CD14-positive monocyte (primary cell): ENCODE measurements at regions of chr16 and their contacts with region 1.

Region 1: DNA sequence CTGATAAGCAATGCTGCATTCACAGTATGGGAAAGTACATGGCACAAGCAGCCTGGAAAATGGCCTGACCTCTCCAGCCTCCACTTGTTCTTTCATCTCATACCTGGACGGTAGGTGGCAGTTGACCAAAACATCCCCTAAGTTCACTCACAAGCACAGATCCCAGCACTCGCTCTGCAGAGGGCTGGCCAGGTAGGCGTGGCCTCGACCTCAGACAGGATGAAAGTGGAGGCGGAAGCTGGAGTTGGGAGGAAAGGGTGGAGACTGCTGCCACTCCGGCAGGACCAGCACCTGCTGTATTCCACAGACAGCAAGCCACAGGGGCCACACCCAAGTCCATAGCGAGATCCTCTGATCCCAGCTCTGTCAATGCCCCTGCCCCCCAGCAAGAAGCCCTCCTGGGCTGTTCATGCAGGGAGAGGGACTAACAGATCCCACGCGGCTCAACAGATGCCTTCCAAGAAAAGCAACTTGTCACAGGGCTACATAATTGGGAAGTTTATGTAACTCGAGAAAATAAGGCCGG is 31.3 kb downstream of the ZCCHC14 start:
- DNase-seq: peak in 1 of 3 donors; percentile 7
- H3K4me3 ChIP-seq: no peak overlapping the region
- H3K4me3 Mint-ChIP-seq: no peak overlapping the region
- H3K27ac ChIP-seq: no peak overlapping the region
- H3K27ac Mint-ChIP-seq: peak overlapping the region in 1 of 7 donors; percentile 37
- H3K4me1 ChIP-seq: peaks cover 27 to 28% of the 10 kb centered on the region in 2 donors
- H3K4me1 Mint-ChIP-seq: peaks cover 33% of the 10 kb centered on the region
- H3K27me3 ChIP-seq: no peaks in the 10 kb centered on the region
- H3K27me3 Mint-ChIP-seq: peaks cover 0 to 7% (median 6%) of the 10 kb centered on the region in 3 donors
- CTCF ChIP-seq: no peak

Region 2: DNA sequence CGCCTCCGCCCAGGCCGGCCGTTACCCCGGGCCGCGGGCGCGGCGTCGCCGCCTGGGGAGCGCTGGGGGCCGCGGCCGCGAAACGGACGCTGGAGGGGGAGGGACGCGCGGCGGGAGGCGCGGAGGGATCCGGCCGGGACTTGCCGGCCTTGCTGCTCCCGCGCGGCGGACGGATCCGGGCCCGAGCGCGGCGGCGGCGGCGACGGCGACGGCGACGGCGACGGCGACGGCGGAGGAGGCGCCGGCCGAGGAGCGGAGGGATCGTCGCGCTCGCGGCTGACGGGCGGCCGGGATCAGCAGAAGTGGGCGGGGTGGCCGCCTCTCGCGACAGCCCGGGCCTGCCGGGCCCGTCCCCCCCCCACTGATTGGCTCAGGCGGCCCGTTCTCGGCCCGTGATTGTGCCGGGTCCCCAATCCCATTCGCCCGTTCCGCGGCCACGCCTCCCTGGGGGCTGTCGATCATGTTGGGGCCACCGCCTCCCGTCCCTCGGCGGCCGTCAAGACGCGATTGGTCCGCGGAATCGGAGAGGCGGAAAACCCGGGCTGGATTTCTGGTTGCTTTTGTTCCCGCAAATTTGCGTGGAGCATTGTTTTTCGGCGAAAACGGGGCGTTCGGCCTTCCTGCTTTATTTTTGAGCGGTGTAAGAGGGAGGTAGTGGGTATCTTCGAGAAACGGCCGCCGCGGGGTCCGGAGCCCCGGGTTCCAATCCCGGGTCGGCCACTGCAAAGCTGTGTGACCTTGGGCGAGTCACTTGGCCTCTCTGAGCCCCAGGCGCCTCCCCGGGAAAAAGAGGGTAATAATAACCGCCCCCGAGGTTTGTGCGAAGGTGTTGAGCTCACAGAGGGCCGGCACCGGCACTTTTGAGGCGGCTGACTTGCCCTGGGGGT is 31.4 kb after region 1 on chr16 and contains the start of gene ZCCHC14:
- intact Hi-C with region 1: loop called in 1 of 2 experiments (anchors 2 kb)
- DNase-seq: peak; percentile 95 to 97 (median 97)
- H3K4me3 ChIP-seq: peak within 1 kb of the TSS; percentile 23 to 73 (median 36)
- H3K4me3 Mint-ChIP-seq: peak within 1 kb of the TSS; percentile 80 to 91
- H3K27ac ChIP-seq: no peak within 1 kb of the TSS
- H3K27ac Mint-ChIP-seq: peak within 1 kb of the TSS in 4 of 7 donors; percentile 7 to 79 (median 50)
- H3K4me1 ChIP-seq: peaks cover 23 to 28% of the 10 kb centered on the region in 2 donors
- H3K4me1 Mint-ChIP-seq: peaks cover 54% of the 10 kb centered on the region
- H3K27me3 ChIP-seq: peaks cover 0 to 44% of the 10 kb centered on the region in 2 donors
- H3K27me3 Mint-ChIP-seq: peaks cover 34 to 68% (median 61%) of the 10 kb centered on the region in 3 donors
- CTCF ChIP-seq: no peak
- polyA plus RNA-seq, gene ZCCHC14: 0.11 to 4.0 (median 0.22) TPM

Region 3: GRCh38 chr16:87507351-87508069 is 46.0 kb after region 1 on chr16:
- intact Hi-C with region 1: loop called in 1 of 2 experiments (anchors 5 kb)
- DNase-seq: peak in 2 of 3 donors; percentile 25 to 39
- H3K4me3 ChIP-seq: peak overlapping the region in 1 of 3 experiments; percentile 33
- H3K4me3 Mint-ChIP-seq: peak overlapping the region; percentile 56 to 87
- H3K27ac ChIP-seq: no peak overlapping the region
- H3K27ac Mint-ChIP-seq: peak overlapping the region in 5 of 7 donors; percentile 10 to 64 (median 51)
- H3K4me1 ChIP-seq: peaks cover 14 to 21% of the 10 kb centered on the region in 2 donors
- H3K4me1 Mint-ChIP-seq: peaks cover 23% of the 10 kb centered on the region
- H3K27me3 ChIP-seq: peaks cover 6 to 8% of the 10 kb centered on the region in 2 donors
- H3K27me3 Mint-ChIP-seq: peaks cover 8 to 24% (median 9%) of the 10 kb centered on the region in 3 donors
- CTCF ChIP-seq: no peak

Region 4: DNA sequence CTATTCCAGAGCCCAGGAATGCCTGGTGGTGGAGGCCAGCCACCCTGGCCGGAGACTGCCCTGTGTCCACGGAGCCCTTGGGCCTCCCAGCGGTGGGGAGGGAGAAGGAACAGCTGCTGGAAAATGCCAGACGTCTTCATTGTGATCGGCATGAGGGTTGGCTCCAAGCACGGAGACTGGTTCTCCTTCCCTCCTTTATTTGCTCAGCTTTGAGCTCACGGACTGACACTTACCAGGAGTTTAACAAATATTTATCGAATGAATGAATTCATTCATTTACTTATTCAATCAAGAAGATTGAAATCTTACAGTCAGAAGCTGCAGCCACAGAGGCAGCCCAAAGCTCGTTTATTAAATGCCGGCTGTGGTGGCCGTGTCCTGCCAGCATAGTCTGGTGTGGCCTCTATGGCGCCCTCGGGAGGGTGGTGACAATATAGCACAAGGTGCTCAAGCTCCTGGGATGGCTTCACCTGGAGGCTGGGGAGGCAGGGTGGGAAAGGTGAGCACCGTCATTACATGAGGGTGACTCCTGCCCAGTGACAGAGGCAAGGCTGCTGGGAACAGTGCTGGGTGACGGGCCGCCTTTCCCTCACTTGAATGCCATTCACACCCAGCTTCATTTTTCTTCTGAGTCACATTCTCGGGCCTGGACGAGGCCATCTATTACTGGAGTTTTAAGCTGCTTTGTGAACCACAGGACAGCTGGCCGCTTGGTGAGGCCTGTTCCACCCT is 109.8 kb after region 1 on chr16:
- intact Hi-C with region 1: no loop called
- DNase-seq: no peak
- H3K4me3 ChIP-seq: no peak overlapping the region
- H3K4me3 Mint-ChIP-seq: no peak overlapping the region
- H3K27ac ChIP-seq: no peak overlapping the region
- H3K27ac Mint-ChIP-seq: no peak overlapping the region
- H3K4me1 ChIP-seq: no peaks in the 10 kb centered on the region
- H3K4me1 Mint-ChIP-seq: no peaks in the 10 kb centered on the region
- H3K27me3 ChIP-seq: peaks cover 0 to 2% of the 10 kb centered on the region in 2 donors
- H3K27me3 Mint-ChIP-seq: peaks cover 3 to 31% (median 23%) of the 10 kb centered on the region in 3 donors
- CTCF ChIP-seq: peak; percentile 41

Region 5: GRCh38 chr16:88686439-88687253 is 1225.1 kb after region 1 on chr16 and contains the start of gene SNAI3:
- intact Hi-C with region 1: no loop called
- DNase-seq: peak; percentile 69 to 78 (median 76)
- H3K4me3 ChIP-seq: peak within 1 kb of the TSS; percentile 71 to 94 (median 89)
- H3K4me3 Mint-ChIP-seq: peak within 1 kb of the TSS; percentile 80 to 86
- H3K27ac ChIP-seq: peak within 1 kb of the TSS; percentile 41 to 77
- H3K27ac Mint-ChIP-seq: peak within 1 kb of the TSS; percentile 54 to 83 (median 58)
- H3K4me1 ChIP-seq: peaks cover 63 to 69% of the 10 kb centered on the region in 2 donors
- H3K4me1 Mint-ChIP-seq: peaks cover 59% of the 10 kb centered on the region
- H3K27me3 ChIP-seq: no peaks in the 10 kb centered on the region
- H3K27me3 Mint-ChIP-seq: peaks cover 13 to 19% (median 15%) of the 10 kb centered on the region in 3 donors
- CTCF ChIP-seq: no peak
- polyA plus RNA-seq, gene SNAI3: 4.2 to 6.4 (median 5.3) TPM